ENCODE measurements at regions of chr1 and their contacts with region 1.

Region 1: GRCh38 chr1:203572134-203572625 is 54.5 kb upstream of the ATP2B4 start:
- DNase-seq: no peak
- H3K4me3 ChIP-seq: no peak overlapping the region
- H3K27ac ChIP-seq: no peak overlapping the region
- H3K4me1 ChIP-seq: peaks cover 28% of the 10 kb centered on the region
- H3K27me3 ChIP-seq: no peaks in the 10 kb centered on the region
- CTCF ChIP-seq: no peak

Region 2: DNA sequence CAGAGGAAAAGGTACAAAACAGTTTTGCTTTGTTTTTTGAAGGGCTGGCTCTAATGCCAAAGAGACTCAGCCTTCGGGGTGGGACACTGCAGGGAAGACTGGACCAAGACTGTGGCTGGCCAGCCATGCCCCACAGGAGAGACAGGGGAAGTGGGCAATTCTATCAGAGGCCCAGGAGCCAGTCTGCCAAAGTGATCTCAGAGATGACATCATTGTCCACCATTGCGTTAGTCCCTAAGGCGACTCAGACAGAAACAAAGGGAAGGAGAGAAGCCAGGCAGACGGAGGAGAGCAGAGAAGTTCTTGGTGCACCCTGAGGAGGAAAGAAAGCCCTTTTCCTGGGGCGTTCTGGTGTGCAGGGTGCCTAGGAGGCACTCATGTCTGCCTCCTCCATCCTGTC is 51.9 kb before region 1 on chr1:
- CTCF ChIA-PET with region 1: no interaction called
- POLR2A ChIA-PET with region 1: no interaction called
- intact Hi-C with region 1: loop called (anchors 5 kb)
- DNase-seq: peak in 1 of 2 experiments; percentile 57
- H3K4me3 ChIP-seq: no peak overlapping the region
- H3K27ac ChIP-seq: peak overlapping the region; percentile 72
- H3K4me1 ChIP-seq: peaks cover 59% of the 10 kb centered on the region
- H3K27me3 ChIP-seq: no peaks in the 10 kb centered on the region
- CTCF ChIP-seq: no peak

Region 3: GRCh38 chr1:203534527-203535230 is 37.5 kb before region 1 on chr1:
- CTCF ChIA-PET with region 1: no interaction called
- POLR2A ChIA-PET with region 1: interaction called, 24 read pairs
- intact Hi-C with region 1: loop called (anchors 1 kb)
- DNase-seq: peak; percentile 81 to 95
- H3K4me3 ChIP-seq: no peak overlapping the region
- H3K27ac ChIP-seq: peak overlapping the region; percentile 93
- H3K4me1 ChIP-seq: peaks cover 74% of the 10 kb centered on the region
- H3K27me3 ChIP-seq: no peaks in the 10 kb centered on the region
- CTCF ChIP-seq: no peak

Region 4: GRCh38 chr1:203652724-203653461 is 80.7 kb after region 1 on chr1:
- CTCF ChIA-PET with region 1: no interaction called
- POLR2A ChIA-PET with region 1: no interaction called
- intact Hi-C with region 1: no loop called
- DNase-seq: no peak
- H3K4me3 ChIP-seq: no peak overlapping the region
- H3K27ac ChIP-seq: no peak overlapping the region
- H3K4me1 ChIP-seq: peaks cover 26% of the 10 kb centered on the region
- H3K27me3 ChIP-seq: no peaks in the 10 kb centered on the region
- CTCF ChIP-seq: no peak

Region 5: GRCh38 chr1:203996126-203996525 is 423.9 kb after region 1 on chr1:
- CTCF ChIA-PET with region 1: no interaction called
- POLR2A ChIA-PET with region 1: no interaction called
- intact Hi-C with region 1: no loop called
- DNase-seq: no peak
- H3K4me3 ChIP-seq: no peak overlapping the region
- H3K27ac ChIP-seq: no peak overlapping the region
- H3K4me1 ChIP-seq: peaks cover 25% of the 10 kb centered on the region; the same call in 1 of the 2 replicates
- H3K27me3 ChIP-seq: no peaks in the 10 kb centered on the region
- CTCF ChIP-seq: no peak